ENCODE measurements at regions of chr2 and their contacts with region 1.

Region 1: DNA sequence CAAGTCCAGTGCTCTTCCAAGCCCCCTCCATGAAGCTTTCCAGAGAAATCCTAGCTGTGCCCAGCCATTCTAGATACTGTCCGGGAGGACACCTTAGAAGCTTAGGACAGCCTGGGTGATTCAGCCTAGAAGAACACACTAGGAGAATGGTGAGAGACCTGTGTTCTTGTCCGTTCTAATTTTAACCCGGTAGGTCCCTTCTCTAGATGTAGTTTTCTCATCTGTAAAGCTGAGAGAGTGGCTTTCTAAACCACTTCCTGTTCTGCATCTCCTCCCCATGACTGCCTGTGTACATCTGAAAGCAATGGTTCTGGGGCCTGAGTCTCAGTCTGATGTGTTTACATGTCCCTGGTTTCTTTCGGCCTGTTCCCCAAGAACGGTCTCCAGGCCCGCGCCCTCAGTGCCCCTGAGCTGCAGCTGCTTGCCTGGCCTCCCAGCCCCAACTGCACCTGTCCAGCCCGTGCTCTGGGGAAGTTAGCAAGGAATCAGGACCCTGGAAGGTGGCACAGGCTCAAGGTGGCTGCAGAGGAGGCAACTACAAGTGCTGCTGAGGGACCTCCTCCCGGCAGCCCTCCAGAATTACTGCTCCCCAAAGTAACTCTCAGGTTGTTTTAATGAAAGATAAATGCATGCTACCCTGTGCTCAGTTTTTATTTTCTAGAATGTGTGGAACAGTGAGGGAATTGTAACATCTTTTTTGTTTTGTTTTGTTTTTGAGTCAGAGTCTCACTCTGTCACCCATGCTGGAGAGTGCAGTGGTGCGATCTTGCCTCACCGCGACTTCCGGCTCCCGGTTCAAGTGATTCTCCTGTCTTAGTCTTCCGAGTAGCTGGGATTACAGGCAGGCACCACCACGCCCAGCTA is 105.9 kb downstream of the LBH start:
- DNase-seq: peak in 4 of 5 donors; percentile 24 to 70 (median 58)
- H3K4me3 ChIP-seq: peak overlapping the region; percentile 40
- H3K4me3 Mint-ChIP-seq: peak overlapping the region; percentile 44 to 91 (median 85)
- H3K27ac ChIP-seq: peak overlapping the region; percentile 55
- H3K27ac Mint-ChIP-seq: peak overlapping the region; percentile 92 to 100 (median 97)
- H3K4me1 ChIP-seq: peaks cover 67% of the 10 kb centered on the region
- H3K4me1 Mint-ChIP-seq: peaks cover 66 to 75% (median 70%) of the 10 kb centered on the region in 3 donors
- H3K27me3 ChIP-seq: no peaks in the 10 kb centered on the region
- H3K27me3 Mint-ChIP-seq: no peaks in the 10 kb centered on the region

Region 2: DNA sequence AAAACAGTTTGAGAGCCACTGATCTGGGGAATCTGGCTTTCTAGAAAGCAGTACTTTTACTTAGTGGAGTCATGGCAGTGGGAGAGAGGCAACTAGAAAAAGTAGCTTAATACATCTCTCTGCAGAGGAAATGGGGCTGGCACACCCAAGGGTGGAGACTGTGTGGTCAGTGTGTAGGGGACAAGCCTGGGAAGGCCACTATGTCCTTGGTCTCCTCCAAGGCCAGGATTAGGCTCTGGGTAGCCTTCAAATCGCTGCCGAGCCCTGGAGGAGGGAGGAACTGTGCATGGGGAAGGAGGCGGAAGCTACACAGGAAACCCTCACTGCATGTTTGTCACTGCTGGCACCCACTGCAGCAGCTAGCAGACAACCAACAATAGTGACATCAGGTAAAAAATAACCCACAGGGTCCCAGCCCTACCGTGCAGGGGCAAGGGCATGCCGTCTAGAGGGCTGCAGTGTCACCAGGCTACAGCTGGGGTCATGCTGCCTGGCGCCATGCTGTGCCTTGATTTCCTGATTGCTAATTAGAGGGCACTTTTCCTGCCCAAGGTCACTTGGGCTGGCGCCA is 71.1 kb before region 1 on chr2:
- CTCF ChIA-PET with region 1: interaction called, 11 read pairs
- POLR2A ChIA-PET with region 1: interaction called, 7 read pairs
- DNase-seq: peak; percentile 38 to 82 (median 73)
- H3K4me3 ChIP-seq: peak overlapping the region; percentile 47
- H3K4me3 Mint-ChIP-seq: peak overlapping the region; percentile 64 to 93 (median 86)
- H3K27ac ChIP-seq: peak overlapping the region; percentile 53
- H3K27ac Mint-ChIP-seq: peak overlapping the region; percentile 89 to 99 (median 98)
- H3K4me1 ChIP-seq: peaks cover 63% of the 10 kb centered on the region
- H3K4me1 Mint-ChIP-seq: peaks cover 60 to 82% (median 79%) of the 10 kb centered on the region in 3 donors
- H3K27me3 ChIP-seq: no peaks in the 10 kb centered on the region
- H3K27me3 Mint-ChIP-seq: no peaks in the 10 kb centered on the region

Measured in CD8-positive, alpha-beta memory T cell (primary cell).